Mammary epithelial cell (primary cell): ENCODE measurements at regions of chr17 and their contacts with region 1.

Region 1: DNA sequence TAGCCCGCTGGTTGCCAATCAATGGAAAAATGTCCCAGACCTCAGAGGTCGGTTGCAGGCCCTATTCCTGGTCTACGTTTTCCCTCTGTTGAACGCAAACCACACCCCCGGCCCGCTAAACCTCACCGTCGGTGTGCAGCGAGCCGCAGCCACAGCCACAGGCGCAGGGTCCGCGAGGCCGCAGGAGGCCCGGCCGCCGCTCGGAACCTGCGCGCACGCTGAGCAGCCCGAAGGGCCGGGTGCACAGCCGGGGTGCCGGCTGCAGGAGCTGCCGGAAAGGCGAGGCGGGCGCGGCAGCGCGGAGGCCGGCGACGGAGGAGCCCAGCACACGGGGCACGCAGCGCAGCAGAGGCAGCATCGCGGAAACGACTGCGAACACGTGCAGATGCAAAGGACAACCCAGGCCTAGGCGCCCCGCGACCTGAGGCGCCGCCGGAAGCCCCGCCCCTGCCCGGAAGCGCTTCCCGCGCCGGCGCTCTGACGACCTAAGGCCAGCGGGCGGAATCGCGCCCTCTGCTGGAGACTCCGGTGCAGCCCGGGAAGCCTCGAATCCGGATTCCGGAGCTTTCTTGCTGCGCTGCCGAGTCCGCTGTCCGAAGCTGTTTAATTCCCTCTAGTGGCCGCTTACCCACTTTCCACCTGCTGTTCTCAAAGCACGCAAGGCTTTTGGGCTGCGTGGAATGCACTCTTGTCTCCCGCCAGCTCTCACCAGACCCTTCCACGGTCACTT is at the start of gene C1QBP:
- DNase-seq: peak; percentile 88
- H3K4me3 ChIP-seq: peak within 1 kb of the TSS; percentile 72 to 95 (median 90)
- H3K27ac ChIP-seq: peak within 1 kb of the TSS; percentile 77
- H3K4me1 ChIP-seq: peaks cover 13% of the 10 kb centered on the region
- H3K27me3 ChIP-seq: no peaks in the 10 kb centered on the region
- CTCF ChIP-seq: peak; percentile 86 to 98
- total RNA-seq, gene C1QBP: 152 to 221 TPM

Region 2: GRCh38 chr17:5191541-5192417 is 247.1 kb before region 1 on chr17 and contains the start of gene ZNF594:
- CTCF ChIA-PET with region 1: no interaction called
- dilution Hi-C with region 1: no loop called
- in situ Hi-C with region 1: no loop called
- intact Hi-C with region 1: loop called (anchors 2 kb)
- DNase-seq: peak; percentile 91
- H3K4me3 ChIP-seq: peak within 1 kb of the TSS; percentile 68 to 85 (median 78)
- H3K27ac ChIP-seq: peak within 1 kb of the TSS; percentile 41
- H3K4me1 ChIP-seq: no peaks in the 10 kb centered on the region
- H3K27me3 ChIP-seq: no peaks in the 10 kb centered on the region
- CTCF ChIP-seq: peak; percentile 55 to 80
- total RNA-seq, gene ZNF594: 4.8 to 5.8 TPM

Region 3: DNA sequence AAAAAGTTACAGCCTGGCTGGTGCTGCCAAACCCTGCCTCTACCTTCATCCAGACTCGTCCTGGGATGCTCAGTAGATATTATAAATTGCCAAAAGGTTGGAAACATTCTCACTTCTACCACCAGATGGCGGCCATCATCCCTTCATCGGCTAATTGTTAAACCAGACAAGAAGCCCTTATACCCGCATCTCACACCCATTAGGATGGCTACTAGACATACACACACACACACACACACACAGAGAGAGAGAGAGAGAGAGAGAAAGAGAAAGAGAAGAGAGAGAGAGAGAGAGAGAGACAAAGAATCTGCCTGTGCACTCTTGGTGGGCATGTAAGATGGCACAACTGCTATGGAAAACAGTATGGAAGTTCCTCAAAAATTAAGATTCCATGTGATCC is 189.3 kb before region 1 on chr17:
- CTCF ChIA-PET with region 1: no interaction called
- dilution Hi-C with region 1: no loop called
- in situ Hi-C with region 1: no loop called
- intact Hi-C with region 1: loop called (anchors 1 kb)
- DNase-seq: peak; percentile 70
- H3K4me3 ChIP-seq: no peak overlapping the region
- H3K27ac ChIP-seq: no peak overlapping the region
- H3K4me1 ChIP-seq: no peaks in the 10 kb centered on the region
- H3K27me3 ChIP-seq: no peaks in the 10 kb centered on the region
- CTCF ChIP-seq: peak; percentile 64 to 69

Region 4: GRCh38 chr17:5297245-5297644 is 141.6 kb before region 1 on chr17:
- CTCF ChIA-PET with region 1: interaction called, 3 read pairs
- dilution Hi-C with region 1: no loop called
- in situ Hi-C with region 1: no loop called
- intact Hi-C with region 1: loop called (anchors 1 kb)
- DNase-seq: peak; percentile 16
- H3K4me3 ChIP-seq: no peak overlapping the region
- H3K27ac ChIP-seq: no peak overlapping the region
- H3K4me1 ChIP-seq: no peaks in the 10 kb centered on the region
- H3K27me3 ChIP-seq: no peaks in the 10 kb centered on the region
- CTCF ChIP-seq: peak; percentile 4 to 23

Region 5: DNA sequence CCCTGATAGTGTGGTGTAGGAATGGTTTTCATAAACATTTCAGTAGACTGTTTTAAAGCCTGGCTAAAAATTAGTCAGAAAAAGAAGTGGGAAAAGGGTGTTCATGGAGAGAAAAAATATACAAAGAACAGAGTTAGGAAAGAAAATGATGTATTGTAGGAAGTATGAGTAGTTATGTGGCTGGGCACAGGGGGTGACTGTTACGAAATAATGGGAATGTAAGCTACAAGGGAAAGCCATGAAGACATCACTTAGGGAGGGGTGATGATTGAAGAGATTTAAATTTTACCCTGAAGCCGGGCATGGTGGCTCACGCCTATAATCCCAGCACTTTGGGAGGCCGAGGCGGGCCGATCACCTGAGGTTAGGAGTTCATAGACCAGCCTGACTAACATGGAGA is 74.7 kb before region 1 on chr17:
- CTCF ChIA-PET with region 1: no interaction called
- dilution Hi-C with region 1: loop called (anchors 5 kb)
- in situ Hi-C with region 1: no loop called
- intact Hi-C with region 1: no loop called
- DNase-seq: peak; percentile 48
- H3K4me3 ChIP-seq: no peak overlapping the region
- H3K27ac ChIP-seq: no peak overlapping the region
- H3K4me1 ChIP-seq: peaks cover 25% of the 10 kb centered on the region
- H3K27me3 ChIP-seq: no peaks in the 10 kb centered on the region
- CTCF ChIP-seq: no peak

Region 6: DNA sequence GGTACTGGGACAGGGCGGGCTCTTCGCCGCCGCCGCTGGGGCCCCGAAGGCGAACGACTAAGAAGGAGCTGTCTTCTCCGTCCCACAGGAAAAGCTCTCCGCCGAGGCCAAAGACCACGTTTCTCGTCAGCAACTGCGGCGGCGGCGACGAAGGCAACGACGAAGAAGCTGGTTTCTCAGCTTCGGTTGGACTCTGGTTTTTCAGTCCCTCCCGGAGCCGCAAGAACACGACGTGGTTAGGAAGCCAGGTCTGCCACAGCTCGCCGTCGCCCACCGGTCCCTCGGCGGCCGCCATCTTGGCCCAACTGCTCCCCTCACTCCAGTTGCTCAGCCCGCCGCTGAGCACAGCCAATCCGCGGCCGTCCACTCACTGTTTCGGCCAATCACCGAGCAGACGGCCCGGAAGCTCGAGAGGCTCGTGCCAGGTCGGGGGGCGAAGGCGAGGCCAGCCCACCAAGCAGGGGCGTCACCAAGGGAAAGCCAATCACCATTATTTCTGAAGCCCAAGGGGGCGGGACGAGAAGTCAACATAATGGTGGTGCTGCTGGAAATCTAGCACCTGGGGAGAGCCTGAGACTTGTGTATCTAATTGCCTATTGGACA is 19.4 kb before region 1 on chr17 and contains the start of gene NUP88:
- CTCF ChIA-PET with region 1: interaction called, 13 read pairs
- dilution Hi-C with region 1: no loop called
- in situ Hi-C with region 1: no loop called
- intact Hi-C with region 1: loop called (anchors 1 kb)
- DNase-seq: peak; percentile 98
- H3K4me3 ChIP-seq: peak within 1 kb of the TSS; percentile 72 to 86 (median 81)
- H3K27ac ChIP-seq: peak within 1 kb of the TSS; percentile 92
- H3K4me1 ChIP-seq: peaks cover 26% of the 10 kb centered on the region
- H3K27me3 ChIP-seq: no peaks in the 10 kb centered on the region
- CTCF ChIP-seq: no peak
- total RNA-seq, gene NUP88: 50.8 to 71.4 TPM

Region 7: GRCh38 chr17:5516060-5516792 is 77.3 kb after region 1 on chr17:
- CTCF ChIA-PET with region 1: no interaction called
- dilution Hi-C with region 1: no loop called
- in situ Hi-C with region 1: no loop called
- intact Hi-C with region 1: loop called (anchors 2 kb)
- DNase-seq: peak; percentile 90
- H3K4me3 ChIP-seq: no peak overlapping the region
- H3K27ac ChIP-seq: peak overlapping the region; percentile 33
- H3K4me1 ChIP-seq: peaks cover 17% of the 10 kb centered on the region
- H3K27me3 ChIP-seq: no peaks in the 10 kb centered on the region
- CTCF ChIP-seq: no peak